Breast epithelium (tissue), 4 donors: ENCODE measurements at regions of chr13 and their contacts with region 1.

Region 1: DNA sequence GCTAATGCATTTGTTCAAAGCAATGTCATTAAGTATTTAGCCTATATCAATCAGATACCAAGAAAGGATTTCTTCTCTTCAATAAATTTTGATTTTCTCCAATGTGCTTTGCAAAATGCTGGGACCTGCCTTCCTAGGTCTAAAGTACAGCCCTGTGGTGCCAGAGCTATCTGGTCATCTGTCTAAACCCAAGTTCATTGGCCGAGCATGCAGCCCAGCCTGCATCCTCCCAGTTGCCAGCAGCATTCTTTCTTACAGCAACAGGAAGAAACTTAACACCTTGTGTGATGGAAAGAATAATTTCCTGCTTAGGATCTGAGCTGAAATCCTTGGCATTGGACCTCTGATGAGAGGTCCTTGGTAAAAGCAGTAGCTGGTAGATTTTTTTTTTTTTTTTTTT is 310.0 kb downstream of the RBM26 start:
- DNase-seq: no peak
- H3K4me3 ChIP-seq: no peak overlapping the region
- H3K27ac ChIP-seq: no peak overlapping the region
- H3K4me1 ChIP-seq: no peaks in the 10 kb centered on the region
- H3K27me3 ChIP-seq: no peaks in the 10 kb centered on the region
- CTCF ChIP-seq: no peak
- POLR2A ChIP-seq: no peak

Region 2: GRCh38 chr13:78326633-78327032 is 769.5 kb before region 1 on chr13:
- intact Hi-C with region 1: loop called (anchors 5 kb)
- DNase-seq: no peak
- H3K4me3 ChIP-seq: no peak overlapping the region
- H3K27ac ChIP-seq: no peak overlapping the region
- H3K4me1 ChIP-seq: no peaks in the 10 kb centered on the region
- H3K27me3 ChIP-seq: no peaks in the 10 kb centered on the region
- CTCF ChIP-seq: no peak
- POLR2A ChIP-seq: no peak

Region 3: DNA sequence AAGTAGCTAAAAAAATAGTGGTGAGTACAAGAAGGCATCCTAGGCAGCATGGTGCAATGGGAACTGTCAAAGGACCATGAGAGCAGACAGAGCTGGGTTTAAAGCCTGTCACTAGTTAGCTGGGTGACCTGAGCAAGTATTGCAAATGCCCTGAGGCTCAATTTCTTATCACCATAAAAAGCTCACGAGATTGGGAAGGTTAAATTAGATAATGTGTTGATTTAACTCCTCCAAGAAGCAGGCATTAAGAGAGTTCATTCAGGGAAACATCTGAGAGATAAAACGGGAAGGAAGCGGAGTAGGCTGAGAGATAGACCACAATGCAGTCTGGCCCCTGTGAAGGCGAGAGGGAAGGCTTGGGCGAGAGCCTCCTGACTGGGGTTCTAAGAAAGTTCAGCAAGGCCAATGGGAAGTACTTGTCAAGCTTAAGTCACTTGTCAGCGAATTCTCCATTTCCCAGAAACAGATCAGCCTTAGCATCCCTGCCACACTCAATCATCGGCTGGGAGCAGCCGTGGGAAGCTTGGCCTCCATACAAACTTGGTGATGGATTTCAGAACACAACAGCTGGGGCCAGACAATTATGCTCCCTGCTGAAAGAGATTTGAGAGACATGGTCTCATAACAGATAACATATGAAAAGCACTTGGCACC is 598.3 kb before region 1 on chr13:
- intact Hi-C with region 1: no loop called
- DNase-seq: no peak
- H3K4me3 ChIP-seq: no peak overlapping the region
- H3K27ac ChIP-seq: no peak overlapping the region
- H3K4me1 ChIP-seq: no peaks in the 10 kb centered on the region
- H3K27me3 ChIP-seq: no peaks in the 10 kb centered on the region
- CTCF ChIP-seq: no peak
- POLR2A ChIP-seq: no peak

Region 4: DNA sequence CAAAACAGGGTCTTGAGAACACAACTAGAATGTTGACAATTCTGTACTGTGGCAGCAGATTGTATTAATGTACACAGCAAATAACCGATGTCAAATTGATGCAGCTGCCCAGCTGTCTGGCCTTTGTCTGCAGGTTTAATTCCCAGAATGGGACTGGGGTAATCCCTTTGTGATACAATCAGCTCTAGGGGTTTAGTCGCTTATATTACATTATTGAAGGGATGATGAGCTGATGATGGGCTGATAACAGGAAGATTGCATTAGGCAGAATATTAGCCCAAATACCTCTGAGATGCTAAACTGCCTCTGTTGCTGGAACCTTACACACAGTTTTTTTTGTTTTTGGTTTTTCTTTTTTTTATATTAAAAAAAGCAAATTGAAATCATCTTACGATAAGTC is 45.0 kb after region 1 on chr13:
- intact Hi-C with region 1: no loop called
- DNase-seq: no peak
- H3K4me3 ChIP-seq: no peak overlapping the region
- H3K27ac ChIP-seq: no peak overlapping the region
- H3K4me1 ChIP-seq: no peaks in the 10 kb centered on the region
- H3K27me3 ChIP-seq: no peaks in the 10 kb centered on the region
- CTCF ChIP-seq: no peak
- POLR2A ChIP-seq: no peak

Region 5: DNA sequence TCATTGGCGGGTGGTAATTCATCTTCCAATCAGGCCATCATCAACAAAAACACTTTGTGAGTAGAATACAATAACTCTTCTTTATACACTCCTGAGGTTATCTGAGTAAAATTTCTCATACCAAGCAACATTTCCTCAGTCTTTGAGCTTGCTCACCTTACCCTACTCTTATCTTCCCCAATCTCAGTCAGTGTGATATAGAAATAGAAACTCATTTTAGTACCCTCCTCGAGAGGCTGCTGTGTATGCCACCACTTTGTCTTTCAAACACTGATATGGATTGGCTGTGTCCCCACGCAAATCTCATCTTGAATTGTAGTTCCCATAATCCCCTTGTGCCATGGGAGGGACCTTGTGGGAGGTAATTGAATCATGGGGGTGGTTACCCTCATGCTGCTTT is 100.3 kb after region 1 on chr13:
- intact Hi-C with region 1: no loop called
- DNase-seq: no peak
- H3K4me3 ChIP-seq: no peak overlapping the region
- H3K27ac ChIP-seq: no peak overlapping the region
- H3K4me1 ChIP-seq: no peaks in the 10 kb centered on the region
- H3K27me3 ChIP-seq: no peaks in the 10 kb centered on the region
- CTCF ChIP-seq: no peak
- POLR2A ChIP-seq: no peak

Region 6: GRCh38 chr13:79560953-79561352 is 464.9 kb after region 1 on chr13:
- intact Hi-C with region 1: no loop called
- DNase-seq: no peak
- H3K4me3 ChIP-seq: no peak overlapping the region
- H3K27ac ChIP-seq: no peak overlapping the region
- H3K4me1 ChIP-seq: no peaks in the 10 kb centered on the region
- H3K27me3 ChIP-seq: no peaks in the 10 kb centered on the region
- CTCF ChIP-seq: no peak
- POLR2A ChIP-seq: no peak